Posterior vena cava (tissue), 2 donors: ENCODE measurements at regions of chr7 and their contacts with region 1.

Region 1: GRCh38 chr7:155298834-155299534 is 1.3 kb downstream of the INSIG1 start:
- DNase-seq: peak; percentile 98

Region 2: GRCh38 chr7:153399554-153399940 is 1899.4 kb before region 1 on chr7:
- intact Hi-C with region 1: loop called in 1 of 2 experiments (anchors 5 kb)
- DNase-seq: no peak

Region 3: DNA sequence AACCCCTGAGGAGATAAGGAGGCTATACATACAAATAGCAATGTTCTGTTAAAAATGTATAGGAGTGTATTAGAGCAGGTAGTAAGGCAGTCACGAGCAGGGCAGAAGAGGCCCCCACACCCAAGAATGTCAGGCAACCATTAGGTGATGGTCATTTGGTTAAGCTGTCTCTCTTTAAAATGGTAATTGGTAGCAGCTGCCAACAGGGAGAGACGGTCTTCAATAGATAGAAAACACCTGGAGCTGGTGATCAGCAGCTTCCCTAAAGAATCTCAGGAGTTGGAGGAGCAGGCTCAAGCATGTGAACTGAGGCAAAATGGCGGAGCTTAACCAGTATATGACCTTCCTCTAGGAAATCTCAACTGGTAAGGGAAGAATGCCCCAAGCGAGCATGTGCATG is 255.2 kb before region 1 on chr7:
- intact Hi-C with region 1: no loop called
- DNase-seq: no peak